Activated naive CD4-positive, alpha-beta T cell treated with anti-CD3 and anti-CD28 coated beads for 36 hours (primary cell): ENCODE measurements at regions of chr3 and their contacts with region 1.

Region 1: GRCh38 chr3:107690522-107691138 is 167.9 kb downstream of the BBX start:
- DNase-seq: no peak
- H3K4me3 Mint-ChIP-seq: no peak overlapping the region
- H3K27ac Mint-ChIP-seq: no peak overlapping the region
- H3K4me1 Mint-ChIP-seq: peaks cover 20% of the 10 kb centered on the region
- H3K27me3 Mint-ChIP-seq: no peaks in the 10 kb centered on the region

Region 2: DNA sequence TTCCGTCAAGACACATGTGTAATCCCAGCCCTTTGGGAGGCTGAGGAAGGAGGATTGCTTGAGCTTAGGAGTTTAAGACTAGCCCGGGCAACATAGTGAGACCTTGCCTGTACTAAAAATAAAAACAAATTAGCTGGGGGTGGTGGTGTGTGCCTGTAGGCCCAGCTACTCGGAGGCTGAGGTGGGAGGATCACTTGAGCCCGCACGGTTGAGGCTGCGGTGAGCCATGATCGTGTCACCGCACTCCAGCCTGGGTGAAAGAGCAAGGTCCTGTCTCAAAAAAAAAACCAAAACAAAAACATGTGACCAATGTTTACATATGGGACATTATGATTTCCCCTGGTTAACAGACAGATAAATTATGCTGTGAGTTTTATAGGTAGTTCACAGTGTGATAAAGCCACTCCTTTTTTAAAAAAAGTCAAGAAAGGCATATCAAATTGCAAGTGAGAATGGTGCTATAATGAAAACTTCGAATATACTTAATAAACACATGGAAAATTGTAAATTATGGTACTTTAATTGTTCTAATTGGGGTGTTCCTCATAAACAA is 158.6 kb before region 1 on chr3:
- CTCF ChIA-PET with region 1: no interaction called
- intact Hi-C with region 1: no loop called
- DNase-seq: no peak
- H3K4me3 Mint-ChIP-seq: no peak overlapping the region
- H3K27ac Mint-ChIP-seq: no peak overlapping the region
- H3K4me1 Mint-ChIP-seq: peaks cover 16% of the 10 kb centered on the region
- H3K27me3 Mint-ChIP-seq: no peaks in the 10 kb centered on the region

Region 3: DNA sequence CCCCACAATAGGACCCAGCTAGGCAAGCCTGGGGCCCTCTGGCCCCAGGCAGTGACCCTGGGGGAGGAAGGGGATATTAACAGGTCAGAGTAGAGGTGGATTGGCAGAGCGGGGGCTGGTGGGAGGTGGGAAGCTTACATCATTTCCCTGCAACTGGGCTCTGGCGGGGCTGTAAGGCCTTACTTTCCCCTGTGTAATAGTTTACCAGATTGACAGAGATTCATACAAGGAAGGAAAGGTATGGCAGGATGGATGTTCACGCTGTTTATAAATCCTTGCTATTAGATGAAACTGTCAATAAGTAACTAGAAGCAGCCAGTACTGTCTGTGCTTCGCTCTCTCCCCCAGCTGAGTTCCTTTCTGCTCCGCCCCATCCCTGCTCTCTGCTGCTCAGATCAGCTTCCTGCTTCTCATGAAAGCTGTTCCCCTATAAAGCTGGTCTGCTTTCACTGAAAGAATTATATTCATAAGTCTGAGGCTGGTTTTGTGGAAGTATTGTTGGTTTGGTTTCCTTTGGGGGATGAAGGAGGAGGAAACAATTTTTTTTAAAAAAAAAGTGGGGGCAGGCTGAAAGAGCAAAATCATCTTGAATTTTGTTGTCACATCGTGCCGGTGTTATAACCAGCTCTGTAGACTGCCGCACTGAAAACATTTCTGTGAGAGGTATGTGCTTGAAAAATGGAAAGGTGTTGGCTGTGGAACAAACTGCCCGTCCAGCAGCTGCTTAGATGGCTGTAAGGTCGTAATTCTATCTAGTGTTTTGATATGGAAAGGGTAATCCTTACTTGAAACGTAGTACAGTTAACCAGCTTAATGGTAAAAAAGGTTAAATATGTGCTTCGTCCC is 91.5 kb before region 1 on chr3:
- CTCF ChIA-PET with region 1: no interaction called
- intact Hi-C with region 1: no loop called
- DNase-seq: peak; percentile 61
- H3K4me3 Mint-ChIP-seq: peak overlapping the region; percentile 79
- H3K27ac Mint-ChIP-seq: peak overlapping the region; percentile 85
- H3K4me1 Mint-ChIP-seq: peaks cover 50% of the 10 kb centered on the region
- H3K27me3 Mint-ChIP-seq: no peaks in the 10 kb centered on the region

Region 4: DNA sequence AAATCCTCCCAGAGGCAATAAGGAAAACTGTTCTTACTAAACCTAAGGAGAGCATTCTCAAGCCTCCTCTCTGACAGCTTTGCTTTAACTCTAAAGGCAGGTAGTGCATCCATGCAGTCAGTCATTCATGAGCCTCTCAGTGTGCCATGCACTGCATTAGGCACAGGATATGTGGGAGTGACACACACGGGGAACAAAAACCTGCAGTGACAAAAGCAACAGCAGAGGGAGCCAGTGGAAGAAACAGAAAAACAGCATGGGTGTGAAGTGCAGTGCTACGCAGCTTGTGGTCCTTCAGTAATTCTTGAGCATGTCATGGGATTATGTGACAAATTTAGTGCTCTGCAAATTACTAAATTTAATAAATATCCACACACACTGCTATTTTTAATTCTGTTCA is 62.9 kb after region 1 on chr3:
- CTCF ChIA-PET with region 1: interaction called, 15 read pairs
- intact Hi-C with region 1: no loop called
- DNase-seq: peak; percentile 37
- H3K4me3 Mint-ChIP-seq: no peak overlapping the region
- H3K27ac Mint-ChIP-seq: no peak overlapping the region
- H3K4me1 Mint-ChIP-seq: no peaks in the 10 kb centered on the region
- H3K27me3 Mint-ChIP-seq: no peaks in the 10 kb centered on the region